Posterior cingulate gyrus (tissue), 11 donors: ENCODE measurements at regions of chr14 and their contacts with region 1.

Region 1: GRCh38 chr14:62179367-62180018 is 417.3 kb downstream of the SNAPC1 start:
- DNase-seq: peak in 8 of 10 donors; percentile 16 to 91 (median 60)

Region 2: DNA sequence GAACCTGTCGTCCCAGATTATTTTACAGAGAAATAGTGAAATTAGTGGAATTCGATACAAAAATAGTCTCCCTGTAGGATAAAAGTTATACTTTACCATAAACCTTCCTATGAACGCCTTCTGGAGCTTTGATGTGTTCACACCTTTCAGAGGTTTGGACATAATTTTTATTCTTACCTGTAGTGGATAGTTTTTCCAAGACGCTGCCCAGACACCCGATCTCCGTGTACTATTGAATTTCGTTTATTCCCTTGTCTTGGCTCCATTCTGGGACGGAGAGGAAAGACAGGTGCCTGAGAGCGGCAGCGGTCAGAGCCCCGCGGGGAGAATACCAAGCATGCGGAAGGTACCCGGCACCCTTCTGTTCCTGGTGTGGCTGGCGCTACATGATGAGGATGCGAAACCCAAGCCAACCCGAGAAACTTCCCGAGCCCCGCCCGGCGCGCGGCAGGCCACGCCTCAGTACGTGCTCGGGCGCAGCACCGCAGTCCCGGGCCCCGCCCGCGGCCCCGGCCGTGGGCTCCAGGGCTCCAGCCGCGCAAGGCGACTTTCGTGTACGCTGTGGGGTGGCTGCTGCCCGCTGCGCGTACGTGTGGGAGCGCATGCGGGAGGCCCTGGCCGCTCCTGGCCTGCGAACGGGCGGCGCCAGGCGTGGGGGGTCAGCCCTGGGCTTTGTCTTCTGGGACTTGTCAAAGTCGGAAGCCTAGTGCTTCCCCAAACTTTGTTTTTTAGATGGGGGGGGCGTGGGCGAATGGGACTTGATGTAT is 428.6 kb before region 1 on chr14:
- intact Hi-C with region 1: no loop called
- DNase-seq: peak; percentile 52 to 95 (median 68)

Region 3: GRCh38 chr14:62126879-62127478 is 52.5 kb before region 1 on chr14:
- intact Hi-C with region 1: no loop called
- DNase-seq: no peak

Region 4: DNA sequence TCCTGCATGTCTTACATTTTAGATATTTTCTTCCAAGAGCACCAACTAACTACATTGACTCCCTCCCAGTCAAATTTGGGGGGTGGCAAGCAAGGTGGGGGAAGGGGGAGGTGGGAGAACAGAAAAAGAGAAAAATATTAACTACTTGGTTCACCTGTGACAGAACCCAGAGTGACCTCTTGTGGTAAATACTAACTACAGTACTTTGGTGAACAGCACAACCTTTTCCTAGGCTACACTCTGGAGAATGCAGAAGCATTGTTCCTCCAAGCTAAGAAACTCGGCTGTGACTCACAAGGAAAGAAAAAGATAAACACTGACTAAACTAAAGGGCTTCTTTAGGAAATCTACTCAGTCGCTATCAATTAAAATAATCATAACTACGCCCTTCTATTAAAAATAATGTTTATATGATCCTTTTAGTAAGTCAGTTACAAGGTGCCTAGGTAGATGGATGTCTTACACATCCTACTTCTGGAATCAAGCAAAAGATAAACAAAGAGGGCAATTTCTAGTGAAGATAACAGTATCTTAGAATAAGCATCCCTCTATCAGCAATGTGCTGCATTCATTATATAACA is 860.4 kb after region 1 on chr14:
- intact Hi-C with region 1: loop called (anchors 10 kb)
- DNase-seq: no peak